ENCODE measurements at regions of chr1 and their contacts with region 1.

Region 1: DNA sequence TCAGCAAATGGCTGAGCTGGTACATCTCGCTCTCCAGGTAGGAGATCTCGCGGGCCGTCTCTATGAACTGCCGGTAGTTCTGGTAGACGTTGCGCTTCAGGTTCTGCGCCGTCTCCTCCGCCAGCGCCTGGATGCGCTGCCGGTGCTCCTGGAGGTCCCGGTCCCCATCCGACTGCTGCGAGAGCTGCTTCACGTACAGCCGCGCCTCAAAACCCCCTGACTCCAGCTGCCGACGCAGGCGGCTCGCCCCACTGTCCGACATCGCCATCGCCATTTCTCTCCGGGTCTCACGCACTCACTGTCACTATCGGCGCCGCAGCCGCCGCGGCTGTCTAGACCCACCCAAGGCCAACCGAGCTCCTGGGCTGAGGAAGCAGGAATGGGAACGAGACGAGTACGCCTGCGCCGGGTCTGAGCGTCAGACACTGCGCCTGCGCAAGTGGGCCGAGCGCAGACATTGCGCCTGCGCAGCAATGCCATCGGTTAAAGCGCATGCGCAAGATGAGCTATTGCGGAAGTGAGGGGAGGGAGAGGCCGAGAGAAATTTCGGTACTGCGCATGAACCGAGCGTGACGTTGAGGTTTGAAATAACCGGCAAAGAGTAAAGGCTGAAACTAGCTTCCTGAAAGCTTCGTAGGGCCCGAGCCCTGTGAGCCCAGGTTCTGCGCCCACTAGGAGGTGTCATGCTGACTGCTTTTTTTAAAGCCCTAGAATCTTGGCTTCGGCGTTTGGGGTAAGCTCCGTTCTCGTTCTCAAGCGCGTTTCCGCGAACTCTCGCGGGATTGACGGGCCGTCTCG is at the start of gene EXOC8:
- H3K4me3 Mint-ChIP-seq: peak within 1 kb of the TSS; percentile 96
- H3K27ac Mint-ChIP-seq: peak within 1 kb of the TSS; percentile 99
- H3K4me1 Mint-ChIP-seq: peaks cover 39% of the 10 kb centered on the region
- H3K27me3 Mint-ChIP-seq: no peaks in the 10 kb centered on the region

Region 2: GRCh38 chr1:231240883-231241735 is 96.6 kb before region 1 on chr1 and contains the start of gene GNPAT:
- intact Hi-C with region 1: loop called (anchors 5 kb)
- H3K4me3 Mint-ChIP-seq: peak within 1 kb of the TSS; percentile 98
- H3K27ac Mint-ChIP-seq: peak within 1 kb of the TSS; percentile 96
- H3K4me1 Mint-ChIP-seq: peaks cover 62% of the 10 kb centered on the region
- H3K27me3 Mint-ChIP-seq: no peaks in the 10 kb centered on the region

Region 3: GRCh38 chr1:231528172-231529029 is 190.7 kb after region 1 on chr1 and contains the start of gene TSNAX:
- intact Hi-C with region 1: loop called (anchors 1 kb)
- H3K4me3 Mint-ChIP-seq: peak within 1 kb of the TSS; percentile 95
- H3K27ac Mint-ChIP-seq: peak within 1 kb of the TSS; percentile 98
- H3K4me1 Mint-ChIP-seq: peaks cover 43% of the 10 kb centered on the region
- H3K27me3 Mint-ChIP-seq: no peaks in the 10 kb centered on the region

Measured in dendritic cell treated with granulocyte-macrophage colony-stimulating factor and Interleukin-4, amounts not matched to agents 40 ng/mL and 50 ng/mL, for 4 days (primary cell).